Mammary epithelial cell (primary cell): ENCODE measurements at regions of chr17 and their contacts with region 1.

Region 1: DNA sequence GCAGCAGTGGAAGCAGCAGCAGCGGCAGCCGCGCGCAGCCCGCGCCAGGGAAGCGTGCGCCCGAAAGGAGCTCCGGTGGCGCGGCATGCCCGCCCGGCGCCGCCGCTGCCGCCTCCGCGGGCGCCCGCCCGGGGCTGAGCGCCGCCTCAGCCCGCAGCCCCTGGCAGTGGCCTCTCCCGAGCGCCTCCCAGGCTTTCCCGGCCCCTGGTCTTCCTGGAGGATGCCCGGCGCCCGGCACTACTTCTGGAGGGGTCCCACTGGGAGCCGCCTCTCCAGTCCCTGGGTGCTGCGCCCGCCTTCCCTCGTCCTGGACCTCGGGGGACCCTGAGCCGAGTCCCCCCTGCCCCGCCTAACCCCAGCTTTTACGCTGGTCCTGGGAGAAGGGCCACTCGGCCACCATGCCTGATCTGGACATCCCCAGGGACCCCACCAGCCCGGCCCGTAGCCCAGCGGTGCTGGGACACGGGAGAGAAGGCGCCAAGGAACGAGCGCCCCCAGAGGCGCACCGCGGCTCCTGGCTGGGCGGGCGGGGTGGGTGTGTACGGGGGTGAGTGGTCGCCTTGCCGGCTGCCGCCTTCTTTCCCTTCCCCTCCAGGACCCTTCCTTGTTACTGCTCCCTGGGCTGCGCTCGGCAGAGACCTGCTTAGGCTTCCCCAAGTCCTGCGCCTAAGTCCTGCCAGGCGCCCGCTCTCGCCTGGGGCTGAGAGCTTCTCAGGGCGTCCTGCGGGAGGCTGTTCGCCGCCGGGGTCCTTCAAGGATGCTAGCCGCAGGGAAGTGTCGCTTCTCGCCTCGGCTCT is 713 bp downstream of the ASIC2 start:
- DNase-seq: peak; percentile 50
- H3K4me3 ChIP-seq: peak overlapping the region; percentile 36 to 52 (median 36)
- H3K27ac ChIP-seq: no peak overlapping the region
- H3K4me1 ChIP-seq: peaks cover 18% of the 10 kb centered on the region
- H3K27me3 ChIP-seq: peaks cover 3% of the 10 kb centered on the region
- CTCF ChIP-seq: peak; percentile 9 to 43

Region 2: GRCh38 chr17:33234930-33235685 is 57.3 kb before region 1 on chr17:
- CTCF ChIA-PET with region 1: no interaction called
- dilution Hi-C with region 1: no loop called
- in situ Hi-C with region 1: no loop called
- intact Hi-C with region 1: loop called (anchors 2 kb)
- DNase-seq: peak; percentile 97
- H3K4me3 ChIP-seq: no peak overlapping the region
- H3K27ac ChIP-seq: peak overlapping the region; percentile 30
- H3K4me1 ChIP-seq: peaks cover 10% of the 10 kb centered on the region
- H3K27me3 ChIP-seq: no peaks in the 10 kb centered on the region
- CTCF ChIP-seq: no peak

Region 3: DNA sequence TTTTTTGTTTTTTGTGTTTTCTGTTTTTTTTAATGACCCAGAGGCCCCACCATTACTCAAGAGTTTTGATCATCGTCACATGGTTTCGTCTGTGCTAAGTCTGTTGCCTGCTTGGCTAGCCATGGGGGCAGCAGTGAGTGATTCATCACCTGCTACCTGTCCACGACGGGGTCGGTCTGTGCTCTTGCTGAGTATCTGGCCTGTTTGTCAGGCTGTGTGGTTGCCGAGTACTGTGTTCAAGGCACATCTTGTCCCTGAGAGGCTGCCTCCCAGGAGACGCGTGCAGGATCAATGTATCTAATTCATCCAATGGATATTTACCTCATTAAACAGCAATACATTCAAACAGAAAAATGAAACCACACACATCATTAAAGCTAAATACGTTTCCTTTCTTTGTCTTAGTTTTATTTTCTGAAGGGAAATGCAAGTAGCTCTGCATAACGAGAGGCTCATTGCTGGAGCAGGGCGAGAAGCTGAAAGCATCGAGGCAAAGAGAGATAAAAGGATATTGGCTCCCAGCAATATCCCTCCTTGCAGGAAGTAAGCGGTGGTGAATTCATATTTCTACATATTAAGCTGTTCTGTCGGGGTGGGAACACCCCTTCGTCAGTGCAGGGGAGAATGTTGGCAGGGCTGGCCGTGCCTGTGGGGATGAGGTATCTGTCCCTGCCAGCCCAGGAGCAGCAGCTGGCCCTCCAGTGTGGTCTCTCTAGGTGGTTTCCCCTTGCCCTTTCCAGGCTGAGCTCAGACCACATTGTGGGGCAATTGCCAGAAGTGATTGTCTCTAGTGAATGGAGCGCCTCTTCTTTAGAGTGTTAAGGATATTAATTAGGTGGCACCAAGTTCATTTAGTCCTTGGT is 166.9 kb after region 1 on chr17:
- CTCF ChIA-PET with region 1: no interaction called
- dilution Hi-C with region 1: no loop called
- in situ Hi-C with region 1: no loop called
- intact Hi-C with region 1: no loop called
- DNase-seq: no peak
- H3K4me3 ChIP-seq: no peak overlapping the region
- H3K27ac ChIP-seq: no peak overlapping the region
- H3K4me1 ChIP-seq: no peaks in the 10 kb centered on the region
- H3K27me3 ChIP-seq: no peaks in the 10 kb centered on the region
- CTCF ChIP-seq: no peak